ENCODE measurements at regions of chr18 and their contacts with region 1.

Region 1: DNA sequence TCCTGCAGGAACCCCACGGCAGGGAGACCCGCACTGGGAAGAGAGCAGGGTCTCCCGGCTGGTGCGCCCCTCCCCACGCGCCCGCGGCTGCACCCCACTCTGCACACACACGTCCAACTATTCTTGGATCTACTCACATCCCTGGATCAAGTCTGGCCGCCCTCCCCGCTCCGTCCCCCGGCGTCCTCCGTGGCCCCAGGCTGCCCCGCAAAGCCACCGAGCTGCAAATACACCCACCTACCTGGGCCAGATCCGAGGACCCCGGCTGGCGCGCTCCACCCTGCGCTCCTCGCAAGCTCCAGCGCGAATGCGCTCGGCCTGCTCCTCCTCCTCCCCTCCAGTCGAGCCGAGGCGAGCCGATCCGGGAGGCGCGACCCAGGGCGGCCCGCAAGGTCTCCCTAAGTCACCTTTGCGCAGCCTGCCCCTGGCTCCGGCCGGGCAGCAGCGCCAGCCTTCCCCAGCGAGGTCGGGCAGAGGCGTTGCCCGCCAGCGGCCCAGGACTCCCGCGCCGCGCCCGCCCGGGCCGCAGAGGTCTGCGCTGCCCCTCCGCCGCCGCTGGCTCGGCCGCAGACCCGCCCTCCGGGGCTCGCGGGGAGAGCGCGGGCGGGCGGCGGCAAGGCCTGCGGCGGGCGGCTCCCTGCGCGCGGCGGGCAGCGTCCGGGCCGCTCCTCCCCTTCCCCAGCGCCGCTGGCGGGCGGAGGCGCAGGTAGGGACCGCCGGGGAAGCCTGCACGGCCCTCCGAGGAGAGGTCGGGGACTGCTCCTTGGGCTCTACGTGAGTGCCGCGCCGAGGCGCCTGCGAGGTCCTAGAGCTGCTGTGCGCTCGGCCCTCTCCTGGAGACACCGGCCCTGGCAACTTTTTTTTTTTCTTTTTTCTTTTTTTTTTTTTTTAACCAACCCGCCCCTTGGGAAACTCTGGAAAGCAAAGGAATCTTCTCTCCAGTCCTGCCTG is 126.0 kb downstream of the OSBPL1A start:
- DNase-seq: peak; percentile 71 to 90 (median 85)
- ATAC-seq: peak; percentile 71 to 92 (median 87)
- H3K4me3 ChIP-seq: peak overlapping the region; percentile 62 to 94 (median 76)
- H3K27ac ChIP-seq: peak overlapping the region; percentile 84 to 97 (median 94)
- H3K4me1 ChIP-seq: peaks cover 0 to 51% (median 27%) of the 10 kb centered on the region in 12 donors
- H3K27me3 ChIP-seq: no peaks in the 10 kb centered on the region
- CTCF ChIP-seq: peak in 10 of 12 donors; percentile 4 to 45 (median 24)
- POLR2A ChIP-seq: peak in 1 of 2 donors; percentile 35

Region 2: GRCh38 chr18:24176727-24177416 is 94.8 kb before region 1 on chr18:
- intact Hi-C with region 1: loop called (anchors 1 to 5 kb)
- DNase-seq: peak in 4 of 5 donors; percentile 56 to 70 (median 61)
- ATAC-seq: peak in 3 of 4 donors; percentile 72 to 85 (median 79)
- H3K4me3 ChIP-seq: no peak overlapping the region
- H3K27ac ChIP-seq: no peak overlapping the region
- H3K4me1 ChIP-seq: peaks cover 0 to 9% (median 3%) of the 10 kb centered on the region in 12 donors
- H3K27me3 ChIP-seq: no peaks in the 10 kb centered on the region
- CTCF ChIP-seq: peak; percentile 65 to 88 (median 74)
- POLR2A ChIP-seq: no peak

Region 3: DNA sequence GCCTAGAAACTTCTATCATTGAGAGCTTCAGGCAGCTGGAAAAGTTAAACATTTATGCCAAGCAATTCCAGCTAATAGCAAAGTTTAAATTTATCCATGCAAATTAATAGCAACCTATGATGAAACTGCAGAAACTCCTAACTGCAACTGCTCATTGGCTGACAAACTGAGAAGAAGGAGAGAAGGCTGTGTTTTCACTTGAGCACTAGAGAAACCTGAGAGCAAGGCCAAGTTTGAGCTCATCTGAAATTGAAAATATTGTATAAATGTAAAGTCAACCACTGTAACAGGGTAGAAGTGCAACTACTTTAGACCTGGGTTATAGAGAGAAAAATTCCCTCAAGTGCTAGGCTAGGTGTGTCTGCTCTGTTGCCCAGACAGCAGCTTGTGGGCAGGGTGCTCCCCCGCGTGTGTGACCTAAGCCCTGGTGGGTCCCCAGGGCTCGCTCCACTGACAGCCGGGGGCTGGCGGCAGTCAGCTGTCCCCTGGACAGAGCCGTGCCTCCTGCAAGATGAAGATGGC is 82.6 kb before region 1 on chr18:
- intact Hi-C with region 1: loop called in 1 of 10 experiments (anchors 5 kb)
- DNase-seq: no peak
- ATAC-seq: peak in 3 of 4 donors; percentile 37 to 57 (median 42)
- H3K4me3 ChIP-seq: no peak overlapping the region
- H3K27ac ChIP-seq: no peak overlapping the region
- H3K4me1 ChIP-seq: peaks cover 0 to 37% (median 21%) of the 10 kb centered on the region in 12 donors
- H3K27me3 ChIP-seq: no peaks in the 10 kb centered on the region
- CTCF ChIP-seq: no peak
- POLR2A ChIP-seq: no peak

Region 4: GRCh38 chr18:24212939-24213338 is 58.7 kb before region 1 on chr18:
- intact Hi-C with region 1: loop called in 2 of 10 experiments (anchors 10 kb)
- DNase-seq: no peak
- ATAC-seq: peak; percentile 41 to 87 (median 74)
- H3K4me3 ChIP-seq: no peak overlapping the region
- H3K27ac ChIP-seq: peak overlapping the region in 3 of 12 donors; percentile 11 to 48 (median 45)
- H3K4me1 ChIP-seq: peaks cover 0 to 43% (median 32%) of the 10 kb centered on the region in 12 donors
- H3K27me3 ChIP-seq: no peaks in the 10 kb centered on the region
- CTCF ChIP-seq: no peak
- POLR2A ChIP-seq: no peak

Region 5: DNA sequence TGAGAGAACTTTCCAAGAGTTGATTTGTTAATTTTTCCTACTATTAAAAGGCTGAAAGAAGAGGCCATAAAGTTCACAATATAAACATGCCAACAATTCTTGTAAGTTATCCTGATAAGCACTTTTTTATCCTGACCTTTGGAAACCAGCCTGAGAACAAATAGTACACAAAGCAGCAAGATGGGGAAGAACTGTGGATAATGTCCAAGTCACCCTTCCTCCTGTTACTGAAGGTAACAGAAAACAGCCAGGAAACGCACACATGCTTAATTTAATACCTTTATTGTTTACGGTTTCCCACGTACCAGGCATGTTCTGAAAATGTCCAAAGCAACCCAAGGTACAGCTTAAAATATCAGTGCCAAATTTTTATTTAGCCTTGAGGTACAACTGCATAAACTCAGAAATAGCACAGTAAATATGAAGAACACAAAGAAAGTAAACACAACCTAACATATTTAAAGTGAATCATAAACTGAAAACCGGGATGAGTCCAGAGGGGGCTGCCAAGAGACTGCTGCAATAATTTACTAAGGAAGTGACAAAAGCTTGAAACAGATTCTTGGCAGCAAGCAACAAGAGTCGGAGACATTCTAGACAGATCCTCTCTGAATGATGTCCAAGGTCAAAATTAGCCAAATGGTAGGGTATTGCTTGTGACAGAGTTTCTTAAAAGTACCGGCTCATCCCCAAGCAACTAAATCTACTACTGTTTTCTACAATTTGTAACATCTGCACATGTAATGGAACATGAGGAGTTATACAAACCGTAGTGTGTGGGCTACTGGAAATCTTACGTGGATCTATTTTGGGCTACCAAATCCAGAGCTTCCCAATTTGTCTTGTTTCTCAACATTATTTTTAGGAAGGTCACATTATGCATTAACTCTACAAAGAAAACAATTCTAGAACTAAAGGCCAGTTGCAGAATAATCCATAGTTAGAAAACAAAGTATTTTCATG is 39.6 kb before region 1 on chr18:
- intact Hi-C with region 1: loop called in 7 of 10 experiments (anchors 2 to 5 kb)
- DNase-seq: peak in 1 of 5 donors; percentile 18
- ATAC-seq: peak; percentile 63 to 73 (median 65)
- H3K4me3 ChIP-seq: peak overlapping the region in 4 of 12 donors; percentile 1 to 27 (median 10)
- H3K27ac ChIP-seq: peak overlapping the region; percentile 56 to 83 (median 69)
- H3K4me1 ChIP-seq: peaks cover 7 to 60% (median 43%) of the 10 kb centered on the region in 12 donors
- H3K27me3 ChIP-seq: no peaks in the 10 kb centered on the region
- CTCF ChIP-seq: no peak
- POLR2A ChIP-seq: no peak

Region 6: GRCh38 chr18:24369426-24369825 is 97.8 kb after region 1 on chr18:
- intact Hi-C with region 1: no loop called
- DNase-seq: no peak
- ATAC-seq: no peak
- H3K4me3 ChIP-seq: no peak overlapping the region
- H3K27ac ChIP-seq: no peak overlapping the region
- H3K4me1 ChIP-seq: no peaks in the 10 kb centered on the region
- H3K27me3 ChIP-seq: no peaks in the 10 kb centered on the region
- CTCF ChIP-seq: no peak
- POLR2A ChIP-seq: no peak

Region 7: DNA sequence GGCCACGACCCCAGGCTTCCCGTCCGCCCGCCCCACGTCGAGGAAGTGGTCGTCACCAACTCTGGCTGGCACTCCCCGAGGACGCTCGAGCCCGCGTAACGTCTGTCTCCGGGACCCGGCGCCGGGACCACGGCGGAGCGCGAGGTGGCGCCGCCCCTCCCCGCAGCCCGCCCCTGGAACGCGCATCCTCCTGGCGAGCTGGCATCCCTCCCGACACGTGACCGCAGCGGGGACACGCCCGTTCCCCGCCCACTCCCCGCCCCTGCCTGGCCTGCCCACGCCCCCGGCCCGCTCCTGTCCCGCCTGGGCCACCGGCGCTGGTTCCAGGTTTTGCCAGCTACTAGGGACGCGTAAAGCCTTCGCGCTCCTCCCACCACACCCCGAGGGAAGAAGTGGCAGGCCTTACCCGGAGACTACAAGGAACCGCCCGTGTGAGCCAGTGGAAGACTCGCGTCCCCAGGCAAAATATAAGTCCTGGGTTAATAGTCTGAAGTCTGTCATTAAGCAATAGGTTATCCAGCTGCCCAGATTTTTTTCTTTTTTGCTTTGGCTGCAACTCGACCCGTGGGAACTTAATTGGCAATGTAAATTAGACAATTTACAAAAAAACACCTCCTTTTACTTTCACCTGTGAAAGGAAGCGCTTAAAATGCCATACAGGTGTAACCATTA is 126.2 kb after region 1 on chr18 and contains the start of gene OSBPL1A:
- intact Hi-C with region 1: loop called in 1 of 10 experiments (anchors 5 kb)
- DNase-seq: peak; percentile 95 to 98 (median 96)
- ATAC-seq: peak; percentile 97 to 99 (median 98)
- H3K4me3 ChIP-seq: peak within 1 kb of the TSS; percentile 65 to 88 (median 76)
- H3K27ac ChIP-seq: peak within 1 kb of the TSS in 11 of 12 donors; percentile 66 to 94 (median 84)
- H3K4me1 ChIP-seq: peaks cover 0 to 20% (median 6%) of the 10 kb centered on the region in 12 donors
- H3K27me3 ChIP-seq: no peaks in the 10 kb centered on the region
- CTCF ChIP-seq: peak in 1 of 12 donors; percentile 28
- POLR2A ChIP-seq: peak in 1 of 2 donors; percentile 54
- total RNA-seq, gene OSBPL1A: 49.7 to 85.4 (median 76.1) TPM

Region 8: GRCh38 chr18:24426398-24427294 is 155.0 kb after region 1 on chr18 and contains the start of gene IMPACT:
- intact Hi-C with region 1: loop called in 1 of 10 experiments (anchors 10 kb)
- DNase-seq: peak; percentile 86 to 93 (median 88)
- ATAC-seq: peak; percentile 75 to 100 (median 97)
- H3K4me3 ChIP-seq: peak within 1 kb of the TSS; percentile 56 to 96 (median 85)
- H3K27ac ChIP-seq: peak within 1 kb of the TSS; percentile 19 to 92 (median 82)
- H3K4me1 ChIP-seq: peaks cover 0 to 18% (median 9%) of the 10 kb centered on the region in 12 donors
- H3K27me3 ChIP-seq: peaks cover 0 to 31% (median 0%) of the 10 kb centered on the region in 9 donors
- CTCF ChIP-seq: no peak
- POLR2A ChIP-seq: peak in 1 of 2 donors; percentile 64
- total RNA-seq, gene IMPACT: 10.8 to 37.6 (median 23.8) TPM

Measured in heart left ventricle (tissue), 16 donors.